ENCODE measurements at regions of chr4 and their contacts with region 1.

Region 1: DNA sequence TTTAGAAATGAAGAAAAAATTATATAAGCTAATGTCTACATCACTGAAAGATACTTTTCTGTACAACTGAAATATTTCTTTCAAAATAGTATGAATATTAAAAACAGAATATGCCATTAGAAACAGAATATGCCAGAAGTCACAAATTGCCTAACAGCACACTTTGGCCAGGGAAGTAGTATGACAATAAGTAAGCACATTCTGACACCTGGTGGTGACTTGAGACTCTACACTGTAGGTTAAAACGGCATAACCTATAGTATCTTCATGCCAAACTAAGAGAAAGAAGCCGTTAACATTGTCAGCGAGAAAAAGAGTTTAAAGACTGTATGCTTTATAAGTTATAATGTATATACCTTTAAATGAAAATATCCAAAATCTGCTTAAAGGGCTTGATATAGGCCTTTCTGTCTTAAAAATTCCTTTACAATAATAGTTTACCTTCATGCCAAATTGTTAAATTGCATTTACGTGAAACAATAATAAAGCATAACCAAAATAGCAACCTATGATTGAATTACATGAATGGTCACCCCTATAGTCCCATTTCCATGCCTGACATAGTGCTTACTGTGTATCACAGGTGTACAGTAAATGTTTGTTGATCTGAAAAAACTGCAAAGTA is 32.8 kb downstream of the FAM13A start:
- DNase-seq: peak; percentile 84

Region 2: DNA sequence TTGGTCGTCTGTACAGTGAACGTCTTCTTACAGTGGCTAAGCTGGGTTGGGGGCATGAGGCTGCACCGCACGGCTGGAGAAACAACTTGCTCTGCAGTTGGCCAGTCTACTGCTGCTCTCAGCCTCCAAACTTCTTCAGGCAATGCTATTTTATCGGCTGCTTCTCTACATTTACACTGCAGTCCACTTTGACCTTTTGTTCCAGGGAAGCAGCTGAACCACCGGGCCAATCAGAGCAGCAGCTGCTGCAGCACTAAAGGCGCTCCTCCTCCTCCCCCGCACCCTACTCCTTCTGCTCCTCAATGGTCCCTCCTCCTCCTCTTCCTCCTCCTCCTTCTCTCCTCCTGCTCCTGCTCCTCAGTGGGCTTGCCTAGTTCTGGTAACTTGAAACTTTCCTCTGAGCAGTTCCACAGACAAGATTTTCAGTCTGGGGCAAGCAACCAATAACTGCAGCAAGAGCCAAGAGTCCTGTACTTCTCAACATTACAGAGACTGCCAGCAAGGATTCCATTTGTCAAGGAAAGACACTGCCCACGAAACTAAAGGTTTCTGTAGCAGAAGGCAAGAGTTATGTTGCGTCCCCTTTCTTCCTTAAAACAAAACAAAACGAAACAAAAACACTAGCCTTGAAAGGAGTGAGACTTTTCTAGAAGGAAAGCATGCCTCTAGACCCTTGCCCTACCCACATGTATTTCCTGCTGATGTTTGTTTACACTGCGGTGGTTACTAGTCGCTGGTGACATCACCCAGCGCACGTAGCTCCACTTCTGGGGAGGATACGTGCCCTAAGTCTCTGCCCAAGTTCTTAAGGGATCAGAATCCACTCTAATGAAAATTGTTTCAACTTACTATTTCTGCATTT is 200.9 kb before region 1 on chr4:
- in situ Hi-C with region 1: loop called (anchors 25 kb)
- DNase-seq: peak; percentile 91

Measured in KBM-7 (cell line).